MCF 10A (cell line): ENCODE measurements at regions of chr14 and their contacts with region 1.

Region 1: GRCh38 chr14:97978341-97978740 is 1181.2 kb downstream of the VRK1 start:
- DNase-seq: peak; percentile 88
- H3K4me3 Mint-ChIP-seq: peak overlapping the region; percentile 68
- H3K27ac Mint-ChIP-seq: peak overlapping the region; percentile 75
- H3K4me1 Mint-ChIP-seq: peaks cover 31% of the 10 kb centered on the region
- H3K27me3 Mint-ChIP-seq: no peaks in the 10 kb centered on the region
- CTCF ChIP-seq: peak; percentile 58

Region 2: DNA sequence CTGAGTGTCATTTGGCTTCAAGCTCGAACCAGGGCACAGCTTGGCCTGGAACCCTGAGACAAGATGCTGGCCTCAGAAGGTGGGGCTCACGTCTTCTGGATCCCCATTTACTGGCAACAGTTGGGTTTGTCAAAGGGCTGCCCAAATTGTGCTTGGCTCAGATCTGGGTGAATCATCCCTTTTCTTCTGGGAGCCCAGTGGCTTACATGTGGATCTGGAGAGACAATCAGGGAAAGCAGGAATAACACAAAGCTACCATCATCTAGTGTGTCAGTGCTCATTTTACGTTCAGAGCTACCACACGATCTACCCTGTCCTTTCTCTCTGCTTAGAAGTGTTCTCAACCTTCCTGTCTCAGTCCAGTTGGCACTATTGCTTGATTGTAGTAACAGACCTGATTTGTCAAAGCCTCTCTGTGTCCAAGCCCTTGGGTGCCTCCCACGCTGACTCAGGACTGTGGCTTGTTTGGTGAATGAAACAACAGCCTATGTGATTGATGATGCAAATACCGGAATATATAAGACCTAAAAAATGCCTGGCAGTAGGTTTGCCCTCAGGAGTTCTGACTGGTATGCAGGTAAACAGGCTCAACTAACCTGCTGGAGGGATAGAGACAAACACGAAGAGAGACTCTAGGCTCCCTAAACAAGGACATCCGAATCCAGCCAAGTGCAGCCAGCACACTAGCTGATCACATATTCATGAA is 206.8 kb before region 1 on chr14:
- CTCF ChIA-PET with region 1: no interaction called
- POLR2A ChIA-PET with region 1: no interaction called
- intact Hi-C with region 1: no loop called
- DNase-seq: peak; percentile 83
- H3K4me3 Mint-ChIP-seq: no peak overlapping the region
- H3K27ac Mint-ChIP-seq: peak overlapping the region; percentile 61
- H3K4me1 Mint-ChIP-seq: peaks cover 10% of the 10 kb centered on the region
- H3K27me3 Mint-ChIP-seq: no peaks in the 10 kb centered on the region
- CTCF ChIP-seq: no peak

Region 3: GRCh38 chr14:97878727-97879126 is 99.6 kb before region 1 on chr14:
- CTCF ChIA-PET with region 1: interaction called, 3 read pairs
- POLR2A ChIA-PET with region 1: interaction called, 17 read pairs
- intact Hi-C with region 1: no loop called
- DNase-seq: peak; percentile 91
- H3K4me3 Mint-ChIP-seq: no peak overlapping the region
- H3K27ac Mint-ChIP-seq: no peak overlapping the region
- H3K4me1 Mint-ChIP-seq: peaks cover 15% of the 10 kb centered on the region
- H3K27me3 Mint-ChIP-seq: no peaks in the 10 kb centered on the region
- CTCF ChIP-seq: no peak

Region 4: GRCh38 chr14:98035396-98035795 is 57.1 kb after region 1 on chr14:
- CTCF ChIA-PET with region 1: no interaction called
- POLR2A ChIA-PET with region 1: no interaction called
- intact Hi-C with region 1: no loop called
- DNase-seq: no peak
- H3K4me3 Mint-ChIP-seq: no peak overlapping the region
- H3K27ac Mint-ChIP-seq: no peak overlapping the region
- H3K4me1 Mint-ChIP-seq: no peaks in the 10 kb centered on the region
- H3K27me3 Mint-ChIP-seq: no peaks in the 10 kb centered on the region
- CTCF ChIP-seq: no peak

Region 5: GRCh38 chr14:98077176-98077575 is 98.8 kb after region 1 on chr14:
- CTCF ChIA-PET with region 1: interaction called, 4 read pairs
- POLR2A ChIA-PET with region 1: interaction called, 10 read pairs
- intact Hi-C with region 1: no loop called
- DNase-seq: peak; percentile 69
- H3K4me3 Mint-ChIP-seq: no peak overlapping the region
- H3K27ac Mint-ChIP-seq: peak overlapping the region; percentile 25
- H3K4me1 Mint-ChIP-seq: peaks cover 15% of the 10 kb centered on the region
- H3K27me3 Mint-ChIP-seq: no peaks in the 10 kb centered on the region
- CTCF ChIP-seq: no peak

Region 6: GRCh38 chr14:98494582-98494981 is 516.2 kb after region 1 on chr14:
- CTCF ChIA-PET with region 1: no interaction called
- POLR2A ChIA-PET with region 1: interaction called, 23 read pairs
- intact Hi-C with region 1: no loop called
- DNase-seq: peak; percentile 83
- H3K4me3 Mint-ChIP-seq: no peak overlapping the region
- H3K27ac Mint-ChIP-seq: peak overlapping the region; percentile 77
- H3K4me1 Mint-ChIP-seq: peaks cover 45% of the 10 kb centered on the region
- H3K27me3 Mint-ChIP-seq: no peaks in the 10 kb centered on the region
- CTCF ChIP-seq: no peak

Region 7: GRCh38 chr14:99266181-99267178 is 1288.1 kb after region 1 on chr14:
- CTCF ChIA-PET with region 1: interaction called, 35 read pairs
- POLR2A ChIA-PET with region 1: interaction called, 13 read pairs
- intact Hi-C with region 1: loop called (anchors 1 kb)
- DNase-seq: peak; percentile 76
- H3K4me3 Mint-ChIP-seq: peak overlapping the region; percentile 57
- H3K27ac Mint-ChIP-seq: peak overlapping the region; percentile 28
- H3K4me1 Mint-ChIP-seq: peaks cover 17% of the 10 kb centered on the region
- H3K27me3 Mint-ChIP-seq: no peaks in the 10 kb centered on the region
- CTCF ChIP-seq: peak; percentile 98

Region 8: GRCh38 chr14:99415496-99416281 is 1437.3 kb after region 1 on chr14:
- CTCF ChIA-PET with region 1: no interaction called
- POLR2A ChIA-PET with region 1: no interaction called
- intact Hi-C with region 1: loop called (anchors 10 kb)
- DNase-seq: peak; percentile 88
- H3K4me3 Mint-ChIP-seq: no peak overlapping the region
- H3K27ac Mint-ChIP-seq: no peak overlapping the region
- H3K4me1 Mint-ChIP-seq: peaks cover 4% of the 10 kb centered on the region
- H3K27me3 Mint-ChIP-seq: no peaks in the 10 kb centered on the region
- CTCF ChIP-seq: peak; percentile 66